AG04449 (cell line): ENCODE measurements at regions of chr1 and their contacts with region 1.

Region 1: GRCh38 chr1:153990468-153991150 is at the start of gene RPS27:
- DNase-seq: peak; percentile 88
- H3K4me3 ChIP-seq: peak within 1 kb of the TSS; percentile 69
- CTCF ChIP-seq: no peak

Region 2: GRCh38 chr1:153749408-153750005 is 241.1 kb before region 1 on chr1:
- CTCF ChIA-PET with region 1: interaction called, 22 read pairs
- POLR2A ChIA-PET with region 1: no interaction called
- DNase-seq: peak; percentile 31
- H3K4me3 ChIP-seq: no peak overlapping the region
- CTCF ChIP-seq: peak; percentile 98

Region 3: DNA sequence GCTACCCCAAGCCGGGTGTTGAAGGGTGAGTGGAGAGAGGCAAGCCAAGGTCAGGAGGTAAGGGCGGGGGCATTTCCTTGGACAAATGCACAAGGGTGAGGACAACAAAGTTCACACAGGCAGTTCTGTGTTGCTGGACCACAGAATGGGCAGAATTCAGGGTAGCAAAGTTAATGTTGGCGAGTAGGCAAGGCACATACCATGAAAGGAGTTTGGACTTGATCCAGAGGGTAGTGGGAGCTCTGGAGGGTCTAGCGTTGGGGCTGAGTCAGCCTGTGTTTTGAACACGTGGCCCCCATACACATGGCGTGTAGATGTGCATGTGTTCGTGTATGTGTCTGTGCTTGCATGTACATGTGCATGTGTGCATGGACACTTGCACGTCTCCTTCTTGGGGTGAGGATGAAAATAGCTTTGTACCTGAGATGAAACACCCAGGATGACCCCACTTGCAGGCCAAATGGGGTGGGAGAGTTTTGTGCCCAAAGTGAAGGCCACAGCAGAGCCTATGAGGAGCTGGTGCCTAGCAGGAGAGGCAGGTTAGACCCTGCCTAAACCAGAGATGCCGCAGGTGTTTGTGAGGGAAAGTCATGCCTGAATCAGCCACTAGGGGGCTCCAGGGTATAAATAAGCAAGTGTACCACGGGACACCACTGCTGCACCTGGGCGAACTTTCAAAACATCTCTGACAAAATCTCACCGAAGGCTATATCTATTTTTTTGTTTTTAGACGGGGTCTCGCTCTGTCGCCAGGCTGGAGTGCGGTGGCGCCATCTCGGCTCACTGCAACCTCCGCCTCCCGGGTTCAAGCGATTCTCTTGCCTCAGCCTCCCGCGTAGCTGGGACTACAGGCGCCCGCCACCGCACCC is 193.6 kb before region 1 on chr1:
- CTCF ChIA-PET with region 1: interaction called, 88 read pairs
- POLR2A ChIA-PET with region 1: interaction called, 5 read pairs
- DNase-seq: no peak
- H3K4me3 ChIP-seq: no peak overlapping the region
- CTCF ChIP-seq: peak; percentile 77

Region 4: DNA sequence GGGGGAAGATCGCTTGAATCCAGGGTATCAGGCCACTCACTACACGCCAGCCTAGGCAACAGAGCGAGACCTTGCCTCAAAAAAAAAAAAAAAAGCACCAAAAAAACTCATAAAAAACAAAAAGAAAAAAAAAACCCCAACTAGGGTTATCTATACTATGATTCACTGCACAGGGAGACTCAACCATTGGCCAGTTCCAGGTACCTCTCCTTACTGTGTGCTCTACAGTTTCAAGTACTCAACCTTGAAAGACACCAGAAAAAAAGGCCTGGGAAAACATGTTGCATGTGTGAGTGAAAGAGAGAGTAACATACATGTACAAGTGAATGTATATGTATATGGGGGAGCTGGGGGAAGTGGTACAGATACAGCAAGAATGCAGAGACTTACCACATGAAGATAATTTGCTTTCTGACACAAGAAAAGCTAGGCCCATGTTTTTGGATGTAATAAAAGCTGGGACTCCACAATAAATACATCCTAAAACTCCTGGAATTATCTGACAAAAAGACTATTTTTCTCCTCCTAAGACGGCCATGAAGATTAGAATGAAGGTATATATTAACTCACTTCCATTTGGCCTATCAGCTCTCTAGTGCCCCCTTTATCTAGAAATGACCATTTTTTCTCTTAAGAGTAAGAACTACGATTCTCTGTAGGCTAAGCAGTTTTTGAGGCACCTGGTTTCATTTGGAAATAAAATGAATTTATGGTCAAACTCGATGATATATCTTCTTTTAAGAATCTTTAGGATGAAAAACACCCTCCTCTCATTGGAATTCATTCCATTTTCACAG is 163.2 kb before region 1 on chr1:
- CTCF ChIA-PET with region 1: interaction called, 65 read pairs
- POLR2A ChIA-PET with region 1: no interaction called
- DNase-seq: no peak
- H3K4me3 ChIP-seq: no peak overlapping the region
- CTCF ChIP-seq: no peak

Region 5: DNA sequence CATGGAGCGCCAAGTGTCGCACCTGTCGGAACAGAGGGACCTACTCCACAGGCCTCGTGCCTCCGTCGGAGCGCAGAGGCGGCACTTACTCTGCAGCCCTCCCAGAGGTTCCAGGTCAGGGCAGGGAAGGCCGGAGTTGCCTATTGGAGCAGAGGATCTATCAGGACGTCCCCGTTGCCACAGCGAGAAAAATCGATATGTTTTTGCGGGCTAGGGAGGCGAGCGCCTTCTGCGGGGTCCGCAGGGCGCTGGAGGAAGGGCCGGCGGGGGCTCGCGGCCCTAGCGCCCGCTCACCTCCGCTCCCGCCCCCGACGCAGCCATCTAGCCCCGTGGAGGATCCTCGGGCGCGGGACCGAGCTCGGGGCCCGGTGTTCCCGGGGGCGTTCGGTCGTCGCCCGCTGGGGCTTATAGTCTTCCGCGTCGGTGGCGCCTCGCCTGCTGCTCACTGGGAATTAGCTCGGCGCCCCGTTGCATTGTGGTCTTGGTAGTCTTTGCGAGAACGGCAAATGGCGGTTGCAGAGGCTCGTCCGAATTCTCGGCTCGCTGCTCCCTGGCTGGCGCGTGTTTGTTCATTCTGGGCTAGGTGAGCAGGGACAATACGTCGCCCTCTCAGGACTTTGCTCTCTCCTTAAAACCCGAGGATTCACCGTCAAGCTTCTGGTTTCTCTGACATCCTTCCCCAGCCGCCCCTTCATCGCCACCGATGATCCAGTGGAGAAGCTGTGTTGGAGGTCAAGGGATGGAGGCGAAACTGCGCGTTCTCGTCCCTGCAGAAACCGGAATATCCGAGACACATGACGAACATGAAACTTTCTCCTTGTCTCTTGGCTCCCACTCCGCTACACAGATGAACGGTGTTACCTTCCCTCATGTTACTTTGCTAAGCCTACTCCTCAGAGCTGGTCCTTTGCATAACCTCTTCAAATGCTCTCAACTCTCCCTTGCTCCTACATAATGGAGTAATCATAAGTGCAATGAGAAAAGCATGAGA is 13.1 kb before region 1 on chr1 and contains the start of gene JTB:
- CTCF ChIA-PET with region 1: interaction called, 55 read pairs
- POLR2A ChIA-PET with region 1: interaction called, 42 read pairs
- DNase-seq: no peak
- H3K4me3 ChIP-seq: peak within 1 kb of the TSS; percentile 98
- CTCF ChIP-seq: no peak

Region 6: GRCh38 chr1:154014154-154014910 is 23.7 kb after region 1 on chr1:
- CTCF ChIA-PET with region 1: no interaction called
- POLR2A ChIA-PET with region 1: no interaction called
- DNase-seq: peak; percentile 19
- H3K4me3 ChIP-seq: no peak overlapping the region
- CTCF ChIP-seq: no peak